HEK293T (cell line): ENCODE measurements at regions of chr11 and their contacts with region 1.

Region 1: GRCh38 chr11:74492974-74493790 is at the start of gene LIPT2:
- DNase-seq: peak; percentile 92

Region 2: GRCh38 chr11:74462009-74462408 is 31.2 kb before region 1 on chr11:
- CTCF ChIA-PET with region 1: no interaction called
- POLR2A ChIA-PET with region 1: interaction called, 15 read pairs
- DNase-seq: no peak

Region 3: GRCh38 chr11:74476536-74476935 is 16.6 kb before region 1 on chr11:
- CTCF ChIA-PET with region 1: interaction called, 4 read pairs
- POLR2A ChIA-PET with region 1: interaction called, 10 read pairs
- DNase-seq: no peak

Region 4: DNA sequence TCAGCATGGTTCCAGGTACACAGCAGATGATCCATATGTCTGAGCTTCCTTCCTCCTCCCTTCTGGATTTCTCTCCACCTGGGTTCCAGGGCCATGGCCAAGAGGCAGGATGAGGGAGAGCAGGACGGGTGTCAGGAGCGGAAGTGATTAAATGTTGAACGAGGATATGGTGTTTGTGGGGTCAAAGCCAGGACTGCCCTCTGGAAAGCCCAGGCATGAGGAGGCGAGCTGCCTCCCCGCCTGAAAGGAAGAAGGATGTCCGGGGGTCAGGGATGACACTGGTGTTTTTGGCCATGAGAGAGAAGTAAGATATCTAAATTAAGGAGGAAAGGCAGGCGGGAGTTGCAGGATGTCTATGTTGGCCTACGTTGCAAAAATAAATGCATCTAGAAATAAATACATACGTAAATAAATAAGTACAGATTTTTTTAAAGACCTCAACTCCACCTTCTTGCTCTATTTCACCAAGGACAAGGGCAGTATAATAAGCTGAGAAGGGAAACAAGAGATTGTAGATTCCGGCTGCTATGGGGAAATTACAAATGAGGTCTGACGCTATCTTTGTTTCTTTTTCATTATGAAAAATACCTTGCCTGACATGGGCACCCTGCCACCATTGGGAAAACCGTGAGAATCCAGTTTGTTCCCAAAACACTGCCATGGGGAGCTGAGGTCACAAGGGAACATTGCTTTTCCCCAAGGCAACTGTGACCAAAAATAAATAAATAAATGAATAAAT is 27.9 kb after region 1 on chr11:
- CTCF ChIA-PET with region 1: interaction called, 3 read pairs
- POLR2A ChIA-PET with region 1: interaction called, 33 read pairs
- DNase-seq: no peak

Region 5: DNA sequence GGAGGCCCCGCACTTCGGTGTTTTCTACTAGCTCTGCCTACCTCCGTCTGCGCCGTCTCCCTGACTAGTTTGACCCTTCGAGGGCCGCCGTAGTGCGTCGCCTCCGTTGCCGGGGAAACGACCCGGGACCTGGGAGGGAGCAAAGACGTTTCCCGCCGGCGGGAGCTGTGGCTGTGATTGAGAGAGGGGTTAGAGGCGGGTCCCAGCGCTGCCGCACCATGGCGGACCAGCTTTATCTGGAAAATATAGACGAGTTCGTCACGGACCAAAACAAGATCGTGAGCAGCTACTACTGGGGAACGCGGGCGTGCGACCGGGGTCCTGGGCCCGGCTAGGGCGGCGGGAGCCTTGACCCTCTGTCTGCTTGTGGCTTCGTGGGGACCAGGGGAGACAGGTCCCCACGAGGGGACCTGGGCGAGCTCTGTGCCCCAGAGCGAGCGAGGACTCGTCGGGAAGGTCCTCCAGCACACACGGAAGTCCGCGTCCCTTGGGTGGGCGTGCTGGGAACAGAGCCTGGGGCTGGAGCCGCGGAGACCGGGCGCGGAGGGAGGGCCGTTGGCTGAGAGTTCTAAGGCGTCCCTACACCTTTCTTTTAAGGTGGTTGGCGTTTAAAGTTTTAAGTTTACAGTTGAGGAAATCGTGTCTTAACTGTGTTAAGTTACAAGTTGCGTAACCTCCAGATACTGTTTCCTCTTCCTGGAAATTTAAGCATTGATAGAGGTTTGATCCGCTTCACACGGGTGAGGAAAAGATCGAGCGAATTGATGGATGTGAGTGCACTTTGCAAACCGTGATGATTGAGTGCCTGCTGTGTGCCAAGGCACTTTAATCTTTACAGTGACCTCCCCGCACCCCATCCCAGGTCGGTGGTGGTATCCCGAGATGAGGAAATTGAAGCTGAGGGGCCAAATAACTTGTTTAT is 99.5 kb after region 1 on chr11 and contains the start of gene POLD3:
- CTCF ChIA-PET with region 1: interaction called, 3 read pairs
- POLR2A ChIA-PET with region 1: interaction called, 17 read pairs
- DNase-seq: peak; percentile 92